Endothelial cell of umbilical vein (primary cell): ENCODE measurements at regions of chr4 and their contacts with region 1.

Region 1: GRCh38 chr4:173420324-173420752 is 21.4 kb upstream of the SCRG1 start:
- DNase-seq: peak; percentile 49
- H3K4me3 ChIP-seq: no peak overlapping the region
- H3K27ac ChIP-seq: no peak overlapping the region
- H3K4me1 ChIP-seq: peaks cover 17% of the 10 kb centered on the region
- H3K27me3 ChIP-seq: no peaks in the 10 kb centered on the region
- CTCF ChIP-seq: peak; percentile 4 to 21
- POLR2A ChIP-seq: no peak

Region 2: GRCh38 chr4:173168396-173169177 is 251.8 kb before region 1 on chr4 and contains the start of gene GALNT7:
- CTCF ChIA-PET with region 1: no interaction called
- POLR2A ChIA-PET with region 1: no interaction called
- dilution Hi-C with region 1: no loop called
- intact Hi-C with region 1: loop called (anchors 5 kb)
- DNase-seq: peak; percentile 61
- H3K4me3 ChIP-seq: peak within 1 kb of the TSS; percentile 81 to 94 (median 83)
- H3K27ac ChIP-seq: peak within 1 kb of the TSS; percentile 62
- H3K4me1 ChIP-seq: peaks cover 23% of the 10 kb centered on the region
- H3K27me3 ChIP-seq: no peaks in the 10 kb centered on the region
- CTCF ChIP-seq: no peak
- POLR2A ChIP-seq: no peak
- total RNA-seq, gene GALNT7: 54.6 and 63.3 TPM in 2 replicates

Region 3: DNA sequence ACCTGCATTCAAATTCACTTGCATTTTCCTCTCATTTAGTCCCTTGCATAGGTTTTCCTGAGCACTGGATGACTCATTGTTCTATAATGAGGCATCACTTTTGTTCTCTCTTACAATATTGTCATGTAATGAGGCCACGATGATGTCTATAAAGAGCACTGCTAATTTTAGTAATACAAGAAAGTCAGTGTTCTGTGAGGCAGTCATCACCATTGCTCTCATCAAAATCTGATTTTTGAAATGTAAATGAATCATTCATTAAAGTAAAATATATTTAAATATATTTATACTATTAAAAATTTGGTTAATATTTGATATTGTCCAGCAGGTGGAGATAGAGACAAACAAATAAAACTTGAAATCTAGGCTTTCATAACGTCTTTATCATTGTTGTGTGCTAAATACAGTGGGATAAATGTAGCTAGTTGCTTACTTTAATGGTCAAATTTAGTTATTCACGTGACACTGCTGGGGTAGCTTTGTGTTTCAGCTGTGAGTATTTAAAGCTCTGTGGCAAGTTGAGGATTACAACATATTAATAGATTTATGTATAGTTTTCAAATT is 101.6 kb before region 1 on chr4:
- CTCF ChIA-PET with region 1: interaction called, 214 read pairs
- POLR2A ChIA-PET with region 1: interaction called, 5 read pairs
- dilution Hi-C with region 1: no loop called
- intact Hi-C with region 1: loop called (anchors 1 kb)
- DNase-seq: peak; percentile 67
- H3K4me3 ChIP-seq: no peak overlapping the region
- H3K27ac ChIP-seq: peak overlapping the region; percentile 14
- H3K4me1 ChIP-seq: peaks cover 8% of the 10 kb centered on the region
- H3K27me3 ChIP-seq: no peaks in the 10 kb centered on the region
- CTCF ChIP-seq: peak in 1 of 2 donors; percentile 10
- POLR2A ChIP-seq: no peak

Region 4: DNA sequence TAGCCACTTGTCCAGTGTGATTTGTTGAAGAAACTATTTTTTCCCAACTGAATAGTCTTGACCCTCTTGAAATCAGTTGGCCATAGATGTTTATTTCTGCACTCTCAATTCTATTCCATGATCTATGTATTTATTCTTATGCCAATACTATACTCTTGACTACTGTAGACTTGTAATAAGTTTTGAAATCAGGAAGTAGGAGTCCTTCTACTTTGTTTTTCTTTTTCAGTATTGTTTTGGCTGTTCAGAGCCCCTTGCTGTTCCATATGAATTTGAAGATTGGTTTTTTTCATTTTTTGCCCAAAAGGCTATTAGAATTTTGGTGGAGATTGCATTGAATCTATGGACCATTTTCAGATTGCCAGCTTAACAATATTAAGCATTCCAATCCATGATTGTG is 39.4 kb before region 1 on chr4:
- CTCF ChIA-PET with region 1: interaction called, 10 read pairs
- POLR2A ChIA-PET with region 1: no interaction called
- dilution Hi-C with region 1: no loop called
- intact Hi-C with region 1: no loop called
- DNase-seq: no peak
- H3K4me3 ChIP-seq: no peak overlapping the region
- H3K27ac ChIP-seq: no peak overlapping the region
- H3K4me1 ChIP-seq: no peaks in the 10 kb centered on the region
- H3K27me3 ChIP-seq: no peaks in the 10 kb centered on the region
- CTCF ChIP-seq: no peak
- POLR2A ChIP-seq: no peak

Region 5: GRCh38 chr4:173752610-173753230 is 332.4 kb after region 1 on chr4:
- CTCF ChIA-PET with region 1: interaction called, 18 read pairs
- POLR2A ChIA-PET with region 1: no interaction called
- dilution Hi-C with region 1: no loop called
- intact Hi-C with region 1: loop called (anchors 10 kb)
- DNase-seq: peak; percentile 23
- H3K4me3 ChIP-seq: no peak overlapping the region
- H3K27ac ChIP-seq: no peak overlapping the region
- H3K4me1 ChIP-seq: no peaks in the 10 kb centered on the region
- H3K27me3 ChIP-seq: no peaks in the 10 kb centered on the region
- CTCF ChIP-seq: peak; percentile 43 to 45
- POLR2A ChIP-seq: no peak

Region 6: GRCh38 chr4:174318829-174319764 is 898.8 kb after region 1 on chr4:
- CTCF ChIA-PET with region 1: interaction called, 12 read pairs
- POLR2A ChIA-PET with region 1: no interaction called
- dilution Hi-C with region 1: no loop called
- intact Hi-C with region 1: loop called (anchors 2 kb)
- DNase-seq: peak; percentile 45
- H3K4me3 ChIP-seq: no peak overlapping the region
- H3K27ac ChIP-seq: no peak overlapping the region
- H3K4me1 ChIP-seq: peaks cover 3% of the 10 kb centered on the region
- H3K27me3 ChIP-seq: no peaks in the 10 kb centered on the region
- CTCF ChIP-seq: peak; percentile 21 to 25
- POLR2A ChIP-seq: no peak